Right ventricle myocardium superior (tissue), 1 donor: ENCODE measurements at regions of chr5 and their contacts with region 1.

Region 1: GRCh38 chr5:128667152-128667551 is 129.1 kb upstream of the FBN2 start:
- DNase-seq: no peak
- ATAC-seq: peak; percentile 51

Region 2: GRCh38 chr5:128844354-128844923 is 177.3 kb after region 1 on chr5:
- intact Hi-C with region 1: loop called (anchors 10 kb)
- DNase-seq: no peak
- ATAC-seq: no peak

Region 3: GRCh38 chr5:129593525-129593924 is 926.4 kb after region 1 on chr5:
- intact Hi-C with region 1: no loop called
- DNase-seq: no peak
- ATAC-seq: no peak